Natural killer cell (primary cell): ENCODE measurements at regions of chr15 and their contacts with region 1.

Region 1: DNA sequence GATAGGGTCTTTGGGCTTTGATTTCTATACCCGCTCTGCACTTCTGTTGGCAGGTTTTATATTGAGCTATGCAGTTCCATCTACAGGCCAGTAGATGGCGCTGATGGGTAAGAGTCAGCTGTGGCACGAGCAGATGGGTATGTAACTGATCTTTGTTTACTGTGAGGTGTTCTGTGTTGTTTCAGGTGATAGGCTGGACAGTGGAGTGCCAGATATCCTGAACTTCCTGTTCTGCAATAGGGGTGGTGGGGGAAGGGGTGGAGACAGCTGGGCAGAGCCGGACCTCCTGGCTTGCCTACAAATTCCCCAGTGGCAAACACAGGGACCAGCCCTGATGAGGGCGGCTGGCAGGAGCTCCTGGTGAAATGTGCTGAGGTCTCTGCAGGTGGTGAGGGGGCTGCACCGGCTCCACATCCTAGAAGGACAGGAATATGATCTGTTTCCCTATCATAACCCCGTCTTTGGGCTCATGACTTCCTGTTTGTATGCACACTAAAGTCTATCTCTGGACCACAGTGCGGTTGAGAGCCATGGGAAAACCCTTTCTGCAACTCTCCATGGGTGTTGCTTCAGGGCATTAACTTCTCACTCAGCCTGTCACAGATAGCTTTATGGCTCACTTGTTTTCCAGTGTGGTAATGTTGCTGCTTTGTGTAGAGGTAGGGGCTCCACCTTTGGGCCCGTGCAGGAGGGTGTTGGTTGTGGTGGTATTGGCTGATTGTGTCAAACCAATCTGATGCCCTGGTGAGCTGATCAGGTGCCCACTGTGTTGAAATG is 13.4 kb upstream of the FAM98B start:
- DNase-seq: peak; percentile 29 to 90
- ATAC-seq: peak; percentile 89 to 93 (median 92)
- H3K4me3 ChIP-seq: no peak overlapping the region
- H3K4me3 Mint-ChIP-seq: no peak overlapping the region
- H3K27ac ChIP-seq: no peak overlapping the region
- H3K27ac Mint-ChIP-seq: peak overlapping the region in 1 of 2 donors; percentile 60
- H3K4me1 ChIP-seq: peaks cover 6% of the 10 kb centered on the region
- H3K4me1 Mint-ChIP-seq: peaks cover 7 to 8% of the 10 kb centered on the region in 2 donors
- H3K27me3 ChIP-seq: peaks cover 4% of the 10 kb centered on the region
- H3K27me3 Mint-ChIP-seq: peaks cover 26 to 44% of the 10 kb centered on the region in 2 donors
- CTCF ChIP-seq: peak; percentile 94

Region 2: DNA sequence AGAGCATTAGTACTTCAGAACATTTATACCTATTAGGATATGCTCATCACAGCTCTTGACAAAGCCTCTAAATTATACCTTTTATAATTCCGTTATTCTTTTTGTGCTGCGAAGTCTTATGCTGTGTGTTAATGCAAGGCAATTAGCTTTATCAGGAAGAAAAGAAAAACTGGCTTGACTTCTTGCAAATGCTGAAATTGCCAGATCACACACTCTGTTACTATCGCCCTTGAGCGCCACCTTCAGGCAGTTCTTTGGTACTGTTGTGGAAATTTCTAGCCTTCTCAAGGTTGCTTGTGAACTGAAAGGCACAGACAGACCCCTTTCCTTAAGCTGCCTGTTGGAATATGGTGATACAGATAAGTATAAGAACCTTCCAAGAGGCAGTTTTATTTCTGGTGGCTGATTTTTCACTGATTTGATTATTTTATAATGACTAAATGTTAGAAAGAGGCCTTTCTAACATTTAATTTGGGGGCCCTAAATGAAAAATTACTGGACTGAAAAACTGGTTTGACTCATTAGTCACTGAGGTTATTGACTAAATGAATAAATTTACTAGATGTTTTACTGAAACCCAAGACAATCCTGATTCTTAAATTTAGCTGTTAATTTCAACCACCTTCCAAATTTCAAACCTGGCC is 250.3 kb after region 1 on chr15:
- intact Hi-C with region 1: loop called (anchors 1 kb)
- DNase-seq: peak; percentile 70 to 95
- ATAC-seq: peak; percentile 81 to 95 (median 90)
- H3K4me3 ChIP-seq: no peak overlapping the region
- H3K4me3 Mint-ChIP-seq: no peak overlapping the region
- H3K27ac ChIP-seq: no peak overlapping the region
- H3K27ac Mint-ChIP-seq: no peak overlapping the region
- H3K4me1 ChIP-seq: peaks cover 30% of the 10 kb centered on the region
- H3K4me1 Mint-ChIP-seq: peaks cover 31% of the 10 kb centered on the region in 2 donors
- H3K27me3 ChIP-seq: no peaks in the 10 kb centered on the region
- H3K27me3 Mint-ChIP-seq: no peaks in the 10 kb centered on the region
- CTCF ChIP-seq: peak; percentile 84

Region 3: DNA sequence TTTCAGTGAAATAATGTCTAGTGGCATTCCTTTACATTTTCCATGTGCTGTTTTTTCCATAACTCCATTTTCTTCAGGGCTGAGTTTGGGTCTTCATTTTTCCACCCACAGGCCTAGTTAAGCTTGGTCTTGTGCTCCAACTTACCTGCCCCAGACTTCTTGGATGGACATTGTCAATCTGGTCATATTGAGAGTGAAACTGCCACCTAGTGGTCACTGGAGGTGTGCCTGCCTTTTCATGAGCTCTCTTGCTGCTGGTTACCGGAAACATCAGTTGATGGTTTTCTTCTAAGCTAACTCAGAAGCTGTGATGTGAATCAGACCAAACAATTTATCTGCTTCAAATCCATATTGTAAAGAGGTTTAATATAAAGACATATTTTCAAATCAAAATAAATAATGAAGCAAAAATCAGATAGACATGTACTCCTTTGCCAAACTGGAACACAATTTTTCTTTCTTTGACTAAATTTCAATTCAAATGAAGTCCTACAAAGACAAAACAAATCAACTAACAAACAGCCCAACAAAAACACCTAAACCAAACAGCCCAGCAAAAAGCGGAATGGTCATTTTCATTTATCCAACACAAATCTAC is 259.2 kb after region 1 on chr15:
- intact Hi-C with region 1: loop called (anchors 1 kb)
- DNase-seq: peak; percentile 50 to 90
- ATAC-seq: peak; percentile 49 to 72 (median 51)
- H3K4me3 ChIP-seq: no peak overlapping the region
- H3K4me3 Mint-ChIP-seq: peak overlapping the region; percentile 4
- H3K27ac ChIP-seq: no peak overlapping the region
- H3K27ac Mint-ChIP-seq: peak overlapping the region; percentile 41 to 59
- H3K4me1 ChIP-seq: peaks cover 26% of the 10 kb centered on the region
- H3K4me1 Mint-ChIP-seq: peaks cover 36 to 39% of the 10 kb centered on the region in 2 donors
- H3K27me3 ChIP-seq: no peaks in the 10 kb centered on the region
- H3K27me3 Mint-ChIP-seq: no peaks in the 10 kb centered on the region
- CTCF ChIP-seq: peak; percentile 85